Uterus (tissue), 4 donors: ENCODE measurements at regions of chr3 and their contacts with region 1.

Region 1: DNA sequence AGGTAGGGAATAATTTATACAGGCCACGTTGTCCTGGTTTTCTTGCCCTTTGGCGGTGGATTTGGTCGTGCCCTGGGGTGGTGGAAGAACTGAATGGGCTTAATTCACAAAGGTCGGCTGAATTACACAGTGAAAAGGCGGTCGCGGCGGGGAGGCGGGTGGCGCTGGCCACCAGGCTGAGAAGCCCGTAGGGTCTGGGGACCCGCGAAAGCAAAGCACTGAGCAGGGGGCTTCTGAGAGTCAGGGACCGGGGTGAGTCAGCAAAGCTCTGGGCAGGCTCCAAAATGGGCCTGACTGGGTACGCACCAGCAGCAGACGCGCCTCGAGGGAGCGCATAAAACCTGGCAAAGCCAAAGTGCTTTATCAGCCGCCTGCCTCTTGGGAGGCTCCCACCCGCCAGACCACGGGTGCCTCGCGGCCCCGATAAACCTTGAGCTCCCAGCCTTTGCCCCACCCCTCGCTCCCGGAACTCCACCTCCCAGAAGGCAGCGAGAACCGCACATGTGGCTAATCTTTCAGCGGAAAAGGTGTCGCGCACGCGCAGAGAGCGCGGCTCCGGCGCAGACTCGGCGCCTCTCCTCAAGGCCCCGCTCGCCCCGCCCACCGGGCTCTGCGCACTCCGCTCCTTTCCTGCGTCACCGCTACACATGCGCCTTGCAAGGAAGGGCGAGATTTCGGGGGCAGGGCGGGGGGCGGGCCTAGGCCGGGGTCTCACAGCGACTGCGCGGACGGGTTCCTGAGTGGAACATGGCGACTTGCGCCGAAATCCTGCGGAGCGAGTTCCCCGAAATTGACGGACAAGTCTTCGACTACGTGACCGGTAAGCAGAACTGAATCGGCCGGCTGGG is at the start of gene ABCF3:
- DNase-seq: peak; percentile 99
- H3K4me3 ChIP-seq: peak within 1 kb of the TSS; percentile 69 to 91
- H3K27ac ChIP-seq: peak within 1 kb of the TSS; percentile 80
- H3K4me1 ChIP-seq: peaks cover 0 to 16% of the 10 kb centered on the region in 2 donors
- H3K27me3 ChIP-seq: no peaks in the 10 kb centered on the region
- CTCF ChIP-seq: peak in 1 of 4 experiments; percentile 29
- POLR2A ChIP-seq: peak; percentile 52 to 79
- total RNA-seq, gene ABCF3: 11.8 to 73.0 (median 36.8) TPM

Region 2: DNA sequence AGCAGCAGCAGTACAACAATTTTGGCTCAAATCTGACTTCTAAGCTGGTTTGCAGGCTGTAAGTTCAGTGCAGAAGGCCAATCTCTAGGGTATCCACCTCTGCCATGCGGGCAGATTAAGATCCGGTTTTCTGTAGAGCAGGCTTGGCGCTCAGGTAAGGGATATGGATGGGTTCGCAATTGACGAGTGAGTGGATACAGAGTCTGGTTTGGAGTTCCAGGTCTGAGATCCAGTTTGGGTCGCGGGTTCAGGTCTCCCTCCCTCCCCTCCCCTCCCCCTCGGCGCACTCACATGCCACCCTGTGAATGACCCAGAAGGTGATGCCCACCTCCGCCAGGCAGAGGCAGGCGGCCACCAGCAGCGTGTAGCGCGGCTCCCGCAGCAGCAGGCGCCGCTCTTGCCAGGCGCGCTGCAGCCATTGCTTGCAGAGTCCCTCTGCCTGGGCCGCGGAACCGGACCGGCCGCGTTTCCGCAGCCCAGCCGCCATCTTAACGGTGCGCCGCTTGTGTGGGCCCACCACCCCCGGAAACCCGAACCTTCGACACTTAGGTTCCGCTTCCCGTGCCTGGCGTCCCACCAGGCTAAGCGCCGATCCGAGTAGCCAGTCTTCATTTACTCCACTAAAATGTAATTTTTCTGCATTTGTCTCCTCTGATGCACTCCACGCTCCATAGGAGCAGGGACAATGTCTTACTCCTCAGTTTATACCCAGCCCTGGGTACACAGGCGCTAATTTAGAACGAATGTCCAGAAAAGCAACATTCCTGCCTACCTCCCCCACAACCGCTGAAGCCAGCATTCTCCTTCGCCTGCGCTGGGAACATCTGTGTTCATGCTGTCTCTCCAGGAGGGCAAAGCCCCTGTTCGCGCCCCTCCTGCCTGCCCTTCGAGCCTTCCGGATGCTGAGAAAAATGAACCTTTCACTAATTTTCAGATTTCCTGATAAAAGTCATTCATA is 63.0 kb after region 1 on chr3 and contains the start of gene ALG3:
- intact Hi-C with region 1: no loop called
- DNase-seq: peak; percentile 79 to 86
- H3K4me3 ChIP-seq: peak within 1 kb of the TSS; percentile 76 to 97
- H3K27ac ChIP-seq: peak within 1 kb of the TSS; percentile 79 to 84
- H3K4me1 ChIP-seq: no peaks in the 10 kb centered on the region
- H3K27me3 ChIP-seq: no peaks in the 10 kb centered on the region
- CTCF ChIP-seq: peak in 1 of 4 experiments; percentile 35
- POLR2A ChIP-seq: peak in 1 of 2 donors; percentile 50
- total RNA-seq, gene ALG3: 16.5 to 77.1 (median 53.1) TPM

Region 3: GRCh38 chr3:184314363-184314699 is 128.6 kb after region 1 on chr3 and contains the start of gene EIF4G1:
- intact Hi-C with region 1: loop called (anchors 10 kb)
- DNase-seq: peak; percentile 95
- H3K4me3 ChIP-seq: peak within 1 kb of the TSS; percentile 59 to 86
- H3K27ac ChIP-seq: peak within 1 kb of the TSS; percentile 94 to 97
- H3K4me1 ChIP-seq: peaks cover 0 to 15% of the 10 kb centered on the region in 2 donors
- H3K27me3 ChIP-seq: no peaks in the 10 kb centered on the region
- CTCF ChIP-seq: no peak
- POLR2A ChIP-seq: peak; percentile 46 to 76
- total RNA-seq, gene EIF4G1: 133 to 269 (median 170) TPM